ENCODE measurements at regions of chr2 and their contacts with region 1.

Region 1: DNA sequence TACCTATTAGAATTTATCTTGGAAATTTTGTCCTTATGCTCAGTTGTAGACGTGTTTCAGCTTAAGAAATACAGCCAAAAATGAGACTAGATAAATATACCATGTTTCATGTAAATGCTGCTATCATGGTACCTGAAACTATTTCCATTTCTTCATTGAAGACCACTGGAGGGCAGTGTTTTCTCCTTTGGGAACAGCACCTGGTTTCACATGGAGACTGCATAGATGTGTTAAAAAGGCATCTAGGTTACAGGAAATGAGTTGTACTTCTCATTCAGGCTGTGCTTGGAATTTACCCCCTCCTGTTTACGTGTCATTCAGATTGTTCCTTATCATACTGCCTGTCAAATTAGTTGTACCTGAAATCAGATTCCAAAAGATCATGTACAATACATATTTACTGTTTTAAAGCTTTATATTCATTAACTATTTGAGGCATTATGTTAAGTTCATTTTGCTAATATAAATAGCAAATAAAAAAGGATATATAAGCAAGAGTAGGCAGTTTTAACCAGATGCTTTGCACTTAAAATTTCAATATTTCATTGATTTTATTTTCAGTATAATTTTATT is 57.3 kb upstream of the PSMD14 start:
- DNase-seq: peak; percentile 73
- H3K4me3 ChIP-seq: no peak overlapping the region
- H3K27ac ChIP-seq: no peak overlapping the region
- H3K4me1 ChIP-seq: peaks cover 4% of the 10 kb centered on the region
- H3K27me3 ChIP-seq: peaks cover 2 to 7% of the 10 kb centered on the region in 2 experiments
- CTCF ChIP-seq: peak; percentile 46 to 51
- POLR2A ChIP-seq: no peak

Region 2: GRCh38 chr2:161190050-161190449 is 60.9 kb before region 1 on chr2:
- CTCF ChIA-PET with region 1: no interaction called
- POLR2A ChIA-PET with region 1: no interaction called
- dilution Hi-C with region 1: no loop called
- intact Hi-C with region 1: no loop called
- DNase-seq: no peak
- H3K4me3 ChIP-seq: no peak overlapping the region
- H3K27ac ChIP-seq: no peak overlapping the region
- H3K4me1 ChIP-seq: no peaks in the 10 kb centered on the region
- H3K27me3 ChIP-seq: no peaks in the 10 kb centered on the region
- CTCF ChIP-seq: no peak
- POLR2A ChIP-seq: no peak

Region 3: GRCh38 chr2:161223139-161223732 is 27.7 kb before region 1 on chr2:
- CTCF ChIA-PET with region 1: interaction called, 16 read pairs
- POLR2A ChIA-PET with region 1: no interaction called
- dilution Hi-C with region 1: no loop called
- intact Hi-C with region 1: no loop called
- DNase-seq: peak; percentile 77
- H3K4me3 ChIP-seq: no peak overlapping the region
- H3K27ac ChIP-seq: no peak overlapping the region
- H3K4me1 ChIP-seq: no peaks in the 10 kb centered on the region
- H3K27me3 ChIP-seq: no peaks in the 10 kb centered on the region
- CTCF ChIP-seq: peak; percentile 24 to 26
- POLR2A ChIP-seq: no peak

Region 4: DNA sequence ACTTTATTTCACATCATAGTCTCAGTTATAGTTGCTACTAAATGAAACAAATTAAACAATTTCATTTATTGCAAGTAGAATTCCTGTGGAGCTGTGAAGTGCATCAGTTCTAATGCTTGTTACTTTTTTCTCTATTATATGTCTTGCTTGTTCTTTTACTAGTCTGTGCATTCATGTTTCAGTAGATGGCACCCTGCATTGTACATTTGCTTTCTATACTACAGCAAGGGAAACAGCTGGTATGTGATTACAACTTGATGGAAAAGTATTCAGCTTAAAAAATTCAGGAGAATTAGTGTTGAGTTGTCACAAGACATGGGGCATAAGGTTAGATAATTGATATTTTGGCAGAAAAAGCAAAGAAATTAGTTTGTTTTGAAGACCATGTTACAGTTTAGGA is 18.4 kb before region 1 on chr2:
- CTCF ChIA-PET with region 1: interaction called, 14 read pairs
- POLR2A ChIA-PET with region 1: no interaction called
- dilution Hi-C with region 1: no loop called
- intact Hi-C with region 1: no loop called
- DNase-seq: no peak
- H3K4me3 ChIP-seq: no peak overlapping the region
- H3K27ac ChIP-seq: no peak overlapping the region
- H3K4me1 ChIP-seq: peaks cover 10% of the 10 kb centered on the region
- H3K27me3 ChIP-seq: no peaks in the 10 kb centered on the region
- CTCF ChIP-seq: no peak
- POLR2A ChIP-seq: no peak

Region 5: DNA sequence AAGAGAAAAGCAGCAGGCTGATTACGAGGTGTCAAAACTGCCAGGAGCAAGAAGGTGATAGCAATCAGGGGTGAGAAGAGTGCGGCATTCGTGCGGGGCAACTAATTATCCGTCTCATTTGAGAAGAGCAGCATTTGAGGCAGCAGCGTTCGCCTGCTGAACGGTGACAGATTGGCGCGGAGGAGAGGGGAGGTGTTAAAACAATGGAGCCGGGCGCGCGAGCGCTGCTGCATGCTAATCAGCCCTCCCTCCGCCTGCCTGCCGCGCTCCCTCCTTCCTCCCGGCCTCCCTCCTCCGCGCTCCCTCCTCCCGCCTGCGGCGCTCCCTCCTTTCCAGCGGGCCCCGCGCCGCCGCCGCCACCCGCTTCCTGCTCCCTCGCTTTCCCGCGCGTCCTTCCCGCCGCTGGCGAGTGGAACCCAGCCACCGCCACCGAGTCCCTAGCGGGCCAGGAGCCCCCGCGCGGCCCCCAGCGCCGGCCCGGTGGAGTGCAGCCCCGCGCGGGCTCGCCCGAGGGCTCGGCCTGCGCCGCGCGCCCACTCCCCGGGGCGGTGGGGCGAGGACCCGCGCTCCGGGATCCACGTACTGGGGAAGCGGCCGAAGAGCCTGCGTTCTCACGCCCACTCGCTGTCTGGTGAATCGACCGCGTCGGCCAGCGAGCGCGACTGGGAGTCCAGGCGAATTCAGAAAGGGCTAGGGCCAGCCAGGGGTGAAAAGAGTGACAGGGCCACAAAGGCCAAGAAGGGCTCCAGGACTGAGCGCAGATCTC is 12.2 kb before region 1 on chr2:
- CTCF ChIA-PET with region 1: interaction called, 12 read pairs
- POLR2A ChIA-PET with region 1: no interaction called
- dilution Hi-C with region 1: no loop called
- intact Hi-C with region 1: no loop called
- DNase-seq: peak; percentile 68
- H3K4me3 ChIP-seq: peak overlapping the region; percentile 20 to 59 (median 49)
- H3K27ac ChIP-seq: no peak overlapping the region
- H3K4me1 ChIP-seq: peaks cover 12% of the 10 kb centered on the region
- H3K27me3 ChIP-seq: no peaks in the 10 kb centered on the region
- CTCF ChIP-seq: no peak
- POLR2A ChIP-seq: no peak

Region 6: DNA sequence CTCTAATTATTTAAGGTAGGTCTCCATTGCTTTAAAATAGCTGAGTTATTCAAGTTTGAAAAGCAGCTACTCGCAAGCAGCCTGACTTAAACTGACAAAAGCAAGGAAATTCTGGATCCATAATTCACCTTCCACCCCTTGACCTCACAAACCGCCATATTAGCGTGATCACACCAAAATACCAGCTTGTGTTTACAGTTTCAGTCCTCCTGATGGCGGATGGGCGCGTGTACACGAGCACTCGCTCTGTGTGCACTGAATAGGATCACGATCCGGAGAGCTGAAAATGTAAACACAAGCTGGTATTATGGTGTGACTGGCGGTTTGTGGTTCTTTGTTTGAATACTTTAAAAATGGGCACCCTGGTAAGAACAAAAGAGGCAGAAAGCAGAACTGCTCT is 14.9 kb after region 1 on chr2:
- CTCF ChIA-PET with region 1: interaction called, 16 read pairs
- POLR2A ChIA-PET with region 1: no interaction called
- dilution Hi-C with region 1: no loop called
- intact Hi-C with region 1: no loop called
- DNase-seq: no peak
- H3K4me3 ChIP-seq: no peak overlapping the region
- H3K27ac ChIP-seq: no peak overlapping the region
- H3K4me1 ChIP-seq: no peaks in the 10 kb centered on the region
- H3K27me3 ChIP-seq: no peaks in the 10 kb centered on the region
- CTCF ChIP-seq: no peak
- POLR2A ChIP-seq: no peak

Region 7: GRCh38 chr2:161273038-161273760 is 22.2 kb after region 1 on chr2:
- CTCF ChIA-PET with region 1: interaction called, 23 read pairs
- POLR2A ChIA-PET with region 1: interaction called, 3 read pairs
- dilution Hi-C with region 1: no loop called
- intact Hi-C with region 1: loop called (anchors 1 kb)
- DNase-seq: peak; percentile 72
- H3K4me3 ChIP-seq: no peak overlapping the region
- H3K27ac ChIP-seq: no peak overlapping the region
- H3K4me1 ChIP-seq: no peaks in the 10 kb centered on the region
- H3K27me3 ChIP-seq: no peaks in the 10 kb centered on the region
- CTCF ChIP-seq: peak; percentile 44 to 56
- POLR2A ChIP-seq: no peak

Region 8: DNA sequence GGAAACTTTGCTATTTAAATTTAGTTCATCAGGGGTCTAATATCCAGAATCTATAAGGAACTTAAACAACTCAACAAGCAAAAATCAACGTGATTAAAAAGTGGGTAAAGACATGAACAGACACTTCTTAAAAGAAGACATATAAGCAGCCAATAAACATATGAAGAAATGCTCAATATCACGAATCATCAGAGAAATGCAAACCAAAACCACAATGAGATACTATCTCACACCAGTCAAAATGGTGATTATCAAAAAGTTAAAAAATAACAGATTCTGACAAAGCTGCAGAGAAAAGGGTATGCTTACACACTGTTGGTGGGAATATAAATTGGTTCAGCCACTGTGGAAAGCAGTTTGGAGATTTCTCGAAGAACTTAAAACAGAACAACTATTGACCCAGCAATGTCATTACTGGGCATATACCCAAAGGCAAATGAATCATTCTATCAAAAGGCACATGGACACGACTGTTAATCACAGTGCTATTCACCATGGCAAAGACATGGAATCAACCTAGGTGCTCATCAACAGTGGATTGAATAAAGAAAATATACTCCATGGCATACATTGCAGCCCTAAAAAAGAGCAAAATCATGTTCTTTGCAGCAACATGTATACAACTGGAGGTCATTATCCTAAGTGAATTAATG is 563.2 kb after region 1 on chr2:
- CTCF ChIA-PET with region 1: no interaction called
- POLR2A ChIA-PET with region 1: no interaction called
- dilution Hi-C with region 1: no loop called
- intact Hi-C with region 1: no loop called
- DNase-seq: no peak
- H3K4me3 ChIP-seq: no peak overlapping the region
- H3K27ac ChIP-seq: no peak overlapping the region
- H3K4me1 ChIP-seq: no peaks in the 10 kb centered on the region
- H3K27me3 ChIP-seq: no peaks in the 10 kb centered on the region
- CTCF ChIP-seq: no peak
- POLR2A ChIP-seq: no peak

Measured in endothelial cell of umbilical vein (primary cell).